ENCODE measurements at regions of chr6 and their contacts with region 1.

Region 1: GRCh38 chr6:94680669-94681212 is 896.6 kb upstream of the MANEA start:
- DNase-seq: no peak
- H3K4me3 ChIP-seq: no peak overlapping the region
- H3K27ac ChIP-seq: no peak overlapping the region
- H3K4me1 ChIP-seq: no peaks in the 10 kb centered on the region
- H3K27me3 ChIP-seq: no peaks in the 10 kb centered on the region
- CTCF ChIP-seq: no peak
- EP300 ChIP-seq: no peak
- POLR2A ChIP-seq: no peak

Region 2: DNA sequence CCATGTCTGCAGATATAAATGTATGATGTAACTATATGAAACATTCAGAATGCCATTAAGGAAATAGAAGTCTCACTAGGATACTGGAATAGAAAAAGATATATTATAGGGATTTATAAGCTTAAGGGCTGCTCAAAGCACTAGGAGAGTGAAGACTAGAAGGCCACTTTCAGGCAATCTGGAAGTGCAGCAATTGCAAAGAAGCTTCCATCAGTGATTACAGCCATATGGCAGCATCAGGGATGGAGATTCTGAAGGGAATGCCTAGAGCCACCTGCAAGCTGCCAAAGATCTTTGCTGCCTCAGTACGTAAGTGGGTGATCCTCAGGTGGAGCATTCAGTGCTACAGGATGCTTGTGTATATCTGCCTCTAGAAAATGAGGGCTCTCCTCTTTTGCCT is 465.2 kb before region 1 on chr6:
- intact Hi-C with region 1: no loop called
- DNase-seq: no peak
- H3K4me3 ChIP-seq: no peak overlapping the region
- H3K27ac ChIP-seq: no peak overlapping the region
- H3K4me1 ChIP-seq: no peaks in the 10 kb centered on the region
- H3K27me3 ChIP-seq: no peaks in the 10 kb centered on the region
- CTCF ChIP-seq: no peak
- EP300 ChIP-seq: no peak
- POLR2A ChIP-seq: no peak

Region 3: GRCh38 chr6:95203153-95203754 is 522.5 kb after region 1 on chr6:
- intact Hi-C with region 1: no loop called
- DNase-seq: peak in 1 of 5 donors; percentile 17
- H3K4me3 ChIP-seq: no peak overlapping the region
- H3K27ac ChIP-seq: no peak overlapping the region
- H3K4me1 ChIP-seq: no peaks in the 10 kb centered on the region
- H3K27me3 ChIP-seq: no peaks in the 10 kb centered on the region
- CTCF ChIP-seq: peak in 1 of 3 donors; percentile 59
- EP300 ChIP-seq: no peak
- POLR2A ChIP-seq: no peak

Region 4: GRCh38 chr6:96022225-96022624 is 1341.5 kb after region 1 on chr6:
- intact Hi-C with region 1: loop called in 1 of 4 experiments (anchors 10 kb)
- DNase-seq: no peak
- H3K4me3 ChIP-seq: no peak overlapping the region
- H3K27ac ChIP-seq: no peak overlapping the region
- H3K4me1 ChIP-seq: no peaks in the 10 kb centered on the region
- H3K27me3 ChIP-seq: no peaks in the 10 kb centered on the region
- CTCF ChIP-seq: no peak
- EP300 ChIP-seq: no peak
- POLR2A ChIP-seq: no peak

Measured in ovary (tissue), 10 donors.